MCF 10A (cell line): ENCODE measurements at regions of chr10 and their contacts with region 1.

Region 1: GRCh38 chr10:100878291-100878910 is 34.4 kb upstream of the SLF2 start:
- DNase-seq: peak; percentile 78
- H3K4me3 Mint-ChIP-seq: no peak overlapping the region
- H3K27ac Mint-ChIP-seq: no peak overlapping the region
- H3K4me1 Mint-ChIP-seq: peaks cover 7% of the 10 kb centered on the region
- H3K27me3 Mint-ChIP-seq: no peaks in the 10 kb centered on the region
- CTCF ChIP-seq: peak; percentile 73

Region 2: DNA sequence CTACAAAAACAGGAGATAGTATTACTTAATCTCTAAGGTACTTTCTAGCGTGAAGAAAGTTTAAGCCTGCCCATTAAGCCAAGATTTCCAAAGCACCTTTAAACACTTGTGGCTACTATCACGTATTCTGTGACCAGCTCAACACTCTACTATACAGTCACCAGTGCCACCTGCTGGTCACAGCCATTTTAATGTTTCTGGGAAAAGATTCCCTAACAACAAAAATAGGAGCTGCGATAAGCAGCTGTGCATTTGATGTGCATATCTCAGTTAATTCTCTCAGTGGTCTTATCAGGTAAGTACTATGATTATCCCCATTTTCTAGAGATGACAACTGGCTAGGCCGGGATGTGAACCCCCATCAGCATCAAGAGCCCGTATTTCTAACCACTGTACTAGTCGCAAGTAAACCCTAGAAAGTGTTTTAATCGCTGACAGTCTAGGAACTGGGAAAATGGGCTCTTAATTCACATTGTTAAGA is 359.6 kb before region 1 on chr10:
- CTCF ChIA-PET with region 1: interaction called, 26 read pairs
- POLR2A ChIA-PET with region 1: interaction called, 4 read pairs
- intact Hi-C with region 1: no loop called
- DNase-seq: peak; percentile 72
- H3K4me3 Mint-ChIP-seq: no peak overlapping the region
- H3K27ac Mint-ChIP-seq: no peak overlapping the region
- H3K4me1 Mint-ChIP-seq: no peaks in the 10 kb centered on the region
- H3K27me3 Mint-ChIP-seq: no peaks in the 10 kb centered on the region
- CTCF ChIP-seq: peak; percentile 63

Region 3: DNA sequence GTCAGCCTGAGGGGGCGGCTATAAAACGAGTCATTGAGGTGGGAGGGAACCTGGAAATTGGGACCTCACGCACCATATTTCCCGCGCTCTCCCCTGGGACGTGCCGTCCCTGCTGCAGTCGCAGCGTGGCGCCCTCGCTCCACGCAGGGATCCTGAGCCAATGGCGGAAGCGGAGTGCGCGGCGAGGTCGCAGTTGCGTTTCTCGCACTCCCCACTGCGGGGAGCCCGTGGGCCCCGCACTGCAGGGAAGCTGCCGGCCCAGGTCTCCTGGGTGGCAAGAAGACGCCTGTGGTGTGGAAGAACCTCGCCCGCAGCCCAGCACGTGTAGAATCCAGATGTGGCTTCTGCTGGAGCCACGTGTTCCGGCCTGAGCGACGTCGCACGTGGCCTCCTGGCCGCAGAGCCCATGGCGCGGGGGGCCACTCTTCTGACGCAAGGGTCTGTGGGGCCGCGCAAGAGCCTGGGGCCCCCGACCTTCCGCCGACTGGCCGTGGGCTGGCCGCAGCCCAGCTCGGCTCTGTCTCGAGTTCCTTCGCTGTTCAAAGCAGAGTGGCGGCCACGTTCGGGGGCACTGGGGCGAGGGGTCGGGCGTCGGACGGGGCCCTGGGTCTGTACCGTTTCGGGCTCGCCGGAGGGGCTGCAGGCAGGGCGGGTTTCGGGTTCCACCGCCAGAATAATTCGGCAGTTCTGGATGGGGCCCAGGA is 316.2 kb before region 1 on chr10:
- CTCF ChIA-PET with region 1: interaction called, 3 read pairs
- POLR2A ChIA-PET with region 1: no interaction called
- intact Hi-C with region 1: loop called (anchors 1 kb)
- DNase-seq: peak; percentile 44
- H3K4me3 Mint-ChIP-seq: no peak overlapping the region
- H3K27ac Mint-ChIP-seq: no peak overlapping the region
- H3K4me1 Mint-ChIP-seq: peaks cover 4% of the 10 kb centered on the region
- H3K27me3 Mint-ChIP-seq: no peaks in the 10 kb centered on the region
- CTCF ChIP-seq: peak; percentile 87

Region 4: GRCh38 chr10:100743626-100744135 is 134.7 kb before region 1 on chr10:
- CTCF ChIA-PET with region 1: interaction called, 3 read pairs
- POLR2A ChIA-PET with region 1: interaction called, 4 read pairs
- intact Hi-C with region 1: loop called (anchors 5 kb)
- DNase-seq: peak; percentile 70
- H3K4me3 Mint-ChIP-seq: no peak overlapping the region
- H3K27ac Mint-ChIP-seq: no peak overlapping the region
- H3K4me1 Mint-ChIP-seq: peaks cover 7% of the 10 kb centered on the region
- H3K27me3 Mint-ChIP-seq: peaks cover 94% of the 10 kb centered on the region
- CTCF ChIP-seq: peak; percentile 76

Region 5: DNA sequence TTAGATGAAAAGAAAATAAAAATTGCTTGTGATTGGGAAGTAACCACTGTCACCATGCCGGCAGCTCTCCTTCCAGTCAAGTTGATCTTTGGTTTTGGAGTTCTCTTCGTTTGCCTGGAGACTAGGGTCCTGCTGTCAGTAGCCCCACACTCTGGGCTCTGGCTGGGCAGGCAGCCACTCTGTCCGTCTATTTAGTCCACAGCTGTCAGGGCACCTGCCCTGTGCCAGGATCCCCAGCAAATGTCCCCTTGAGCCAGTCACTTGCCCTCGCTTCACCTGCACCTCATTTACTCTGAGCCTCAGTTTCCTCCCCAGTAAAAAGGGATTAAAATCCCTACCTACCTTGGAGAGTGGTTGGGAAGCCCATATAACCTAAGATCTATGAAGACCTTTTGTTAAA is 77.5 kb before region 1 on chr10:
- CTCF ChIA-PET with region 1: no interaction called
- POLR2A ChIA-PET with region 1: no interaction called
- intact Hi-C with region 1: no loop called
- DNase-seq: no peak
- H3K4me3 Mint-ChIP-seq: no peak overlapping the region
- H3K27ac Mint-ChIP-seq: no peak overlapping the region
- H3K4me1 Mint-ChIP-seq: no peaks in the 10 kb centered on the region
- H3K27me3 Mint-ChIP-seq: peaks cover 91% of the 10 kb centered on the region
- CTCF ChIP-seq: no peak

Region 6: DNA sequence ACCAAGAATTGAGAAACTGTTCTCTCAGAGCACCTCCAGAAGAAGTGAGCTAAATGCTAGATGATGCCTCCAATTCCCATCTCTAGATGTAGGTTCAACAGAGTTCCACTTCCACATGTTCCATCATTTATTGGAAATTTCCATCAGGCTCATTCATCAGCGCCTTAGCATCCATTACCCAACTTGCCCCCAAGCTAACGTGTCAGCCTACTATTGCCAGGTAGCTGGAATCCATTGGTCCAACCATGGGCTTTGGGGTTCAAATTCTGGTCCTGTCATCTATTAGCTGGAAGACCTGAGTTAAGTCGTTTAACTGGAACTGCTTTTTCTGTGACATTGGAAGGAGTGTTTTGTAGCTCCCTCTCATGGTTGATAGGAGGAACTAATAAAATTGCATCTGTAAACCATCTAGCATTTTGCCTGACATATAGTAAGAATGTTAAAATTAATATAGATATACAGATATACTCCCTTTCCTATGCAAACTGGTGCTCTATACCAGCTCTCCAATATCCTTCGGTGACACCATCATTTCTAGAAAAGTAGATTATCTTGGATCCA is 10.5 kb after region 1 on chr10:
- CTCF ChIA-PET with region 1: interaction called, 21 read pairs
- POLR2A ChIA-PET with region 1: interaction called, 3 read pairs
- intact Hi-C with region 1: no loop called
- DNase-seq: no peak
- H3K4me3 Mint-ChIP-seq: no peak overlapping the region
- H3K27ac Mint-ChIP-seq: no peak overlapping the region
- H3K4me1 Mint-ChIP-seq: peaks cover 12% of the 10 kb centered on the region
- H3K27me3 Mint-ChIP-seq: no peaks in the 10 kb centered on the region
- CTCF ChIP-seq: peak; percentile 5